ENCODE measurements at regions of chr3 and their contacts with region 1.

Region 1: GRCh38 chr3:150737874-150738713 is 24.9 kb downstream of the SIAH2 start:
- DNase-seq: no peak
- H3K4me3 Mint-ChIP-seq: peak overlapping the region; percentile 42
- H3K27ac Mint-ChIP-seq: peak overlapping the region; percentile 92
- H3K4me1 Mint-ChIP-seq: peaks cover 93% of the 10 kb centered on the region
- H3K27me3 Mint-ChIP-seq: no peaks in the 10 kb centered on the region

Region 2: GRCh38 chr3:150384296-150385212 is 353.5 kb before region 1 on chr3:
- intact Hi-C with region 1: no loop called
- DNase-seq: peak; percentile 36
- H3K4me3 Mint-ChIP-seq: peak overlapping the region; percentile 37
- H3K27ac Mint-ChIP-seq: peak overlapping the region; percentile 80
- H3K4me1 Mint-ChIP-seq: peaks cover 32% of the 10 kb centered on the region
- H3K27me3 Mint-ChIP-seq: no peaks in the 10 kb centered on the region

Region 3: GRCh38 chr3:150603153-150603979 is 134.7 kb before region 1 on chr3 and contains the start of gene SELENOT:
- intact Hi-C with region 1: loop called (anchors 1 kb)
- DNase-seq: peak; percentile 96
- H3K4me3 Mint-ChIP-seq: peak within 1 kb of the TSS; percentile 99
- H3K27ac Mint-ChIP-seq: peak within 1 kb of the TSS; percentile 99
- H3K4me1 Mint-ChIP-seq: peaks cover 80% of the 10 kb centered on the region
- H3K27me3 Mint-ChIP-seq: peaks cover 2% of the 10 kb centered on the region
- total RNA-seq, gene SELENOT: 139 and 140 TPM in 2 replicates

Region 4: DNA sequence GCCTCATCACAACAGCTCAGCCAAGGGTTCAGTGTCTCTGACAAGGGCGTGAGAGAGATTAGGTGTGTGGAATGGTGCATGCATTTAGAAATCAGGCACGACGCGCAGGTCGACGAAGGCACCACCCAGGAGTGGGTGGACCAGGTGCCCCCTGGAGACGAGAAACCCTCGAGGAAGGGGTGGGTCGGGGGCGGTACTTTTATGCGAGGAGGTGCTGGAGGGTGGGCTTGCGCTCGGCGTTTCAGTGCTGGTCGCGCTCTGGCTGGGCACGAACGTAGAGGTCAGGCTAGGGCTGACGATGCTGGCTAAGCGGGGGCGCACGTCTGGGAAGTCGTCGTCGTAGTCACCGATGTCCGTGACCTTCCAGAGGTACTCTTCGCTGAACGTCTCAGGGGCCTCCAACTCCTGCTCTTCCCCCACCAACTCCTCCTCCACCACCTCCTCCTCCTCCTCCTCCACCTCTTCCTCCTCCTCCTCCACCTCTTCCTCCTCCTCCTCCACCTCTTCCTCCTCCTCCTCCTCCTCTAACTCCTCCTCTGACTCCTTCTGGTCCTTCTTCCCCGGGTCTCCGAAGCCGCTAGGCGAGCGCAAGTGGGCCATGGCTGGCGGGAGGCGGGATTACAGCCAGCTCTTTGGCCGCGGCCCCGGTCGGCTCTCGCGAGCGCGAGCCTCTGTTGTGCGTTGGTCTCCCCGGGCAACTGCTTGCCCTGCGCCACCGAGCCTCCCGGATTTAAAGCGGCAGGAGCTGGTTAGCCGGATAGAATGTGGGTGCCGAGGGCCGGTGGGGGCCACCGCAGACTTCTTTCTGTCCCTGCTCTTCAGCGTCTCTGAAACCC is 34.6 kb before region 1 on chr3 and contains the start of gene ERICH6:
- intact Hi-C with region 1: loop called (anchors 1 kb)
- DNase-seq: peak; percentile 81
- H3K4me3 Mint-ChIP-seq: peak within 1 kb of the TSS; percentile 93
- H3K27ac Mint-ChIP-seq: peak within 1 kb of the TSS; percentile 99
- H3K4me1 Mint-ChIP-seq: peaks cover 23% of the 10 kb centered on the region
- H3K27me3 Mint-ChIP-seq: no peaks in the 10 kb centered on the region
- total RNA-seq, gene ERICH6: not detected in 2 replicates

Region 5: GRCh38 chr3:150721285-150722130 is 16.6 kb before region 1 on chr3:
- intact Hi-C with region 1: loop called (anchors 1 kb)
- DNase-seq: no peak
- H3K4me3 Mint-ChIP-seq: no peak overlapping the region
- H3K27ac Mint-ChIP-seq: no peak overlapping the region
- H3K4me1 Mint-ChIP-seq: peaks cover 46% of the 10 kb centered on the region
- H3K27me3 Mint-ChIP-seq: no peaks in the 10 kb centered on the region

Region 6: GRCh38 chr3:150751753-150752263 is 13.7 kb after region 1 on chr3:
- intact Hi-C with region 1: loop called (anchors 1 kb)
- DNase-seq: no peak
- H3K4me3 Mint-ChIP-seq: peak overlapping the region; percentile 11
- H3K27ac Mint-ChIP-seq: peak overlapping the region; percentile 83
- H3K4me1 Mint-ChIP-seq: peaks cover 86% of the 10 kb centered on the region
- H3K27me3 Mint-ChIP-seq: no peaks in the 10 kb centered on the region

Region 7: DNA sequence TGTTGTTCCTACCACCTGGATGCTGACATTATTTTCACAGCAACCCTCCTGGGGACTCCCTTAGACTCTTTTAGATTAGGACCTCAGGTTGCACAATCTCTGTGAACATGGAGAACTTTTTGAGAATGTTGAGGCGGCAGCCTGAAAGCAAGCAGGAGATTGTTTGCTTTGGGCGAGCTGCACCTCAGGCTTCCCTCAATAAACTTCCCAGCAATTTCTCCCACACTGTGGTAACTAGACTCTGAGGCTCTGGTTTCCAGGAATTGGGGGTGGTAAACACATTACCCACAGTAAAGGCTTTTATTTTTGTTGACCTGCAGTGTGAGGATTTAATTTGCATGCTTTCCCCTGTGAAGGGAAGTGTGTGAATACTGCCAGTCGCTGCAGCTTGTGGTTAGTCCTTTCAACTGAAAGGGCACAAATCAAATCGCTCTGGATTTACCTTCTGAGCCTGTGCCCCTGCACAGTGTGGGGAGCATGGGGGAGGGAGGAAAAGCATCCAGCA is 60.1 kb after region 1 on chr3:
- intact Hi-C with region 1: no loop called
- DNase-seq: no peak
- H3K4me3 Mint-ChIP-seq: peak overlapping the region; percentile 30
- H3K27ac Mint-ChIP-seq: no peak overlapping the region
- H3K4me1 Mint-ChIP-seq: peaks cover 23% of the 10 kb centered on the region
- H3K27me3 Mint-ChIP-seq: peaks cover 2% of the 10 kb centered on the region

Region 8: DNA sequence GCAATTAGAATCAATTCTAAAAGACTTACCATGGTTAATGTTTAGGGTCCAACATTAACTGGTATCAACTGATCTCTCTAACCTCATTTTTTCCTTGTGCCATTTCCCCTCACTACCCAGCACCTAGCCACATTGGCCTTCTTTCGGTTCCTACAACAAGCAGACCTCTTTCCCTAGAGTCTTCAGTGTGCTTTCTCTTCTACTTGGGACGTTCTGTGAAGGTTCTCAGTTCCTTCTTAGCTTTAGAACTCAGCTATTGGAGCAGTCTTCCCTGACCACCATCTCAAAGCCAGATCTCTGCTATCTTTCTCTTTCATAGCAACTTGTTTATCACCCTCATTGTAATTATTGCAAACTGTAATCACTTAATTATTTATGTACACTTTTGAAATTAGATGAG is 198.6 kb after region 1 on chr3:
- intact Hi-C with region 1: no loop called
- DNase-seq: no peak
- H3K4me3 Mint-ChIP-seq: no peak overlapping the region
- H3K27ac Mint-ChIP-seq: no peak overlapping the region
- H3K4me1 Mint-ChIP-seq: no peaks in the 10 kb centered on the region
- H3K27me3 Mint-ChIP-seq: peaks cover 21% of the 10 kb centered on the region

Region 9: GRCh38 chr3:151305101-151305750 is 567.1 kb after region 1 on chr3:
- intact Hi-C with region 1: loop called (anchors 5 kb)
- DNase-seq: no peak
- H3K4me3 Mint-ChIP-seq: peak overlapping the region; percentile 5
- H3K27ac Mint-ChIP-seq: peak overlapping the region; percentile 70
- H3K4me1 Mint-ChIP-seq: peaks cover 63% of the 10 kb centered on the region
- H3K27me3 Mint-ChIP-seq: peaks cover 3% of the 10 kb centered on the region

Region 10: GRCh38 chr3:152205097-152205593 is 1467.1 kb after region 1 on chr3:
- intact Hi-C with region 1: loop called (anchors 10 kb)
- DNase-seq: no peak
- H3K4me3 Mint-ChIP-seq: peak overlapping the region; percentile 88
- H3K27ac Mint-ChIP-seq: peak overlapping the region; percentile 95
- H3K4me1 Mint-ChIP-seq: peaks cover 83% of the 10 kb centered on the region
- H3K27me3 Mint-ChIP-seq: no peaks in the 10 kb centered on the region